ENCODE measurements at regions of chr6 and their contacts with region 1.

Region 1: DNA sequence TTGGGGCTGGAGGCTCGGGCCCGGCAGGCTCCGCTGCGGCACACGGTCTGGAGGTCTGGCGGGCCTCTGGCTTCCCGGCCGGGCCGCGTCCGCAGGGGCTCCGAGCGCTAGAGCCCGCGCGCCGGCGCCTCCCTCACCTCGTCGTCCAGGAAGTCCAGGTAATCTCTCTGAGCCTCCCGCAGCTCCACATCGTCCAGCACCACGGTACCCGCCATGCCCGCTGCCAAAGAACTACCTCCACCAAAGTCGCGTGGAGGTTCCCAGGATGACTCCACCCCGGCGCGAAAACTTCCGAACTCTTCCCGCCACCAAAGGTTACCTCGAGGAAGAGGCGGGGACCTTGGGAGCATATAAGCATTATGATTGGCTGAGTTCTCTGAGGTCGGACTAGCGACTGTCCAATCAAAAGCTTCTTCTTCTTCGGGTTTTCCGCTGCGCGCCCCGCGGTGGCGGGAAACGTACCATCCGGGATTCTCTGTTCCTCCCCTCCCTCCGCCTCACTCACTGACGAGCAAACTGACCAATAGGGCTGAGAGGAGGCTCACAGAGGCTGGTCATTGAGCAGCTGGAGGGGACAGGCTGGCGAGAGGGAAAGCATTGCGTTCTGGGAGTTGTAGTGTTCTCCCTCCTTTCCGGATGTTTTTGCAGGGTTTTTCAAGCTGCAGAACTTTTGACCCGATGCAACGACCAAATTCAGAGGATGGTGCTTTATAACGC is at the start of gene MCM3:
- DNase-seq: peak; percentile 100

Region 2: DNA sequence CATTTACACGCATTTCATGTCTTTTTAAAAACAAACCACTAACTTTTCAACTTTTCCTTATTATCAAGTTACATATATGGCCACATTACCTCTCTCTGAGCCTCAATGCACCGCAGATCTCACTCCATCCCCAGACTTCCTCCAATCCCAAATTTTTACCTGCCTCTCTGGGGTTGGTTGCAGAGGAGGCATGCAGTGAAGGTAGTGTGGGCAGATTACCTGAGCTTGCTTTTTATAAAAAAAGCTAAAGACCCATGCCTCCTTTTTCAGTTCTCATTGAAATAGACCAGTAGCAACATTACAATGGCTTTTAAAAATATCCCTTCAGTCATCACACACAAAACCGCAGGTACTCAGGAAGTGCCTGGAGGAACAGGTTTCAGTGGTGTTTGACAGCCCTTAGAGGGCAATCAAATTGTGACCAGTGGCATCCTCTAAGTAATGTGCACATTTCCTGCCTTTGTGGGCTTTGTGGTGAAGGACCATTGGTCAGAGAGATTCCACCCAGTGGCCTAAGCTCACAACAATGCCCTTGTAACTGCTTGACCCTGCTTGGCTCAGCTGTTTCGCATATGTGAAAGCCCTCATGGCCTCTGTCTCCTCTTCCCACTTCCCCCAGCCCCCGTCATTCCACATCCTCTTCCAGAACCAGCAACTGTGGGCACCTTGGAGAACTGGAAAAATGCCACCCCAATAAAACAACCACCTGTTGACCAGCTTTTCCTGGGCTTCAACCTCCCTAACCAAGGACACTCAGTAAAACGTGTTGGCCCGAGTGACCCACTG is 128.6 kb before region 1 on chr6:
- in situ Hi-C with region 1: no loop called
- DNase-seq: peak; percentile 48

Region 3: GRCh38 chr6:52399511-52400312 is 115.1 kb after region 1 on chr6:
- in situ Hi-C with region 1: loop called (anchors 25 kb)
- DNase-seq: peak; percentile 55

Region 4: GRCh38 chr6:52664186-52664990 is 379.8 kb after region 1 on chr6:
- in situ Hi-C with region 1: loop called (anchors 25 kb)
- DNase-seq: peak; percentile 94

Region 5: GRCh38 chr6:52759085-52759484 is 474.5 kb after region 1 on chr6:
- in situ Hi-C with region 1: no loop called
- DNase-seq: no peak

Measured in KBM-7 (cell line).